ENCODE measurements at regions of chr4 and their contacts with region 1.

Region 1: GRCh38 chr4:102477657-102478056 is 23.5 kb upstream of the NFKB1 start:
- DNase-seq: no peak
- ATAC-seq: no peak
- H3K4me3 ChIP-seq: no peak overlapping the region
- H3K4me3 Mint-ChIP-seq: no peak overlapping the region
- H3K27ac ChIP-seq: no peak overlapping the region
- H3K27ac Mint-ChIP-seq: no peak overlapping the region
- H3K4me1 ChIP-seq: no peaks in the 10 kb centered on the region
- H3K4me1 Mint-ChIP-seq: peaks cover 2 to 16% (median 6%) of the 10 kb centered on the region in 7 donors
- H3K27me3 ChIP-seq: no peaks in the 10 kb centered on the region
- H3K27me3 Mint-ChIP-seq: peaks cover 0 to 14% (median 0%) of the 10 kb centered on the region in 5 donors

Region 2: DNA sequence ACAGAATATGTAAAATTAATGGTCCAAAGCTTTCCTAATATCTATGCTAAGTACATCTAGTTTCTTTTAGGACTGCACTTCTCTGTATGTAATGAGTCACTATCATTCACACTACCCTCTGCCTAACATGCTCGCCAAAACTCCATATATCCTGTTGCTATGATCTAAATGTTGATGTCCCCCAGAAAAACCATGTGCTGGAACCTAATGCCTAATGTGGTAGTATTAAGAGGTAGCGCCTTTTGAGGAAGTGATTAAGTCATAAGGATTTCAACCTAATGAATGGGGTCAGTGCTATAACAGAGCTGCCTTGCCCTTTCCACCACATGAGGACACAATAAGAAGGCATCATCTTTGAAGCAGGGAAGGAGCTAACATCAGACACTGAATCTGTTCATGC is 11.4 kb before region 1 on chr4:
- CTCF ChIA-PET with region 1: no interaction called
- POLR2A ChIA-PET with region 1: no interaction called
- intact Hi-C with region 1: loop called in 1 of 2 experiments (anchors 2 kb)
- DNase-seq: no peak
- ATAC-seq: peak; percentile 34
- H3K4me3 ChIP-seq: no peak overlapping the region
- H3K4me3 Mint-ChIP-seq: peak overlapping the region in 1 of 10 donors; percentile 3
- H3K27ac ChIP-seq: no peak overlapping the region
- H3K27ac Mint-ChIP-seq: peak overlapping the region in 2 of 9 donors; percentile 10 to 48
- H3K4me1 ChIP-seq: peaks cover 0 to 18% of the 10 kb centered on the region in 2 donors
- H3K4me1 Mint-ChIP-seq: peaks cover 15 to 59% (median 38%) of the 10 kb centered on the region in 7 donors
- H3K27me3 ChIP-seq: no peaks in the 10 kb centered on the region
- H3K27me3 Mint-ChIP-seq: no peaks in the 10 kb centered on the region

Region 3: GRCh38 chr4:102511830-102512605 is 34.4 kb after region 1 on chr4:
- CTCF ChIA-PET with region 1: no interaction called
- POLR2A ChIA-PET with region 1: no interaction called
- intact Hi-C with region 1: no loop called
- DNase-seq: no peak
- ATAC-seq: peak; percentile 15
- H3K4me3 ChIP-seq: no peak overlapping the region
- H3K4me3 Mint-ChIP-seq: no peak overlapping the region
- H3K27ac ChIP-seq: no peak overlapping the region
- H3K27ac Mint-ChIP-seq: peak overlapping the region in 2 of 9 donors; percentile 36 to 56
- H3K4me1 ChIP-seq: peaks cover 0 to 7% of the 10 kb centered on the region in 2 donors
- H3K4me1 Mint-ChIP-seq: peaks cover 37 to 84% (median 68%) of the 10 kb centered on the region in 7 donors
- H3K27me3 ChIP-seq: no peaks in the 10 kb centered on the region
- H3K27me3 Mint-ChIP-seq: no peaks in the 10 kb centered on the region

Measured in naive thymus-derived CD4-positive, alpha-beta T cell (primary cell).